Sciatic nerve (tissue), 2 donors: ENCODE measurements at regions of chr2 and their contacts with region 1.

Region 1: DNA sequence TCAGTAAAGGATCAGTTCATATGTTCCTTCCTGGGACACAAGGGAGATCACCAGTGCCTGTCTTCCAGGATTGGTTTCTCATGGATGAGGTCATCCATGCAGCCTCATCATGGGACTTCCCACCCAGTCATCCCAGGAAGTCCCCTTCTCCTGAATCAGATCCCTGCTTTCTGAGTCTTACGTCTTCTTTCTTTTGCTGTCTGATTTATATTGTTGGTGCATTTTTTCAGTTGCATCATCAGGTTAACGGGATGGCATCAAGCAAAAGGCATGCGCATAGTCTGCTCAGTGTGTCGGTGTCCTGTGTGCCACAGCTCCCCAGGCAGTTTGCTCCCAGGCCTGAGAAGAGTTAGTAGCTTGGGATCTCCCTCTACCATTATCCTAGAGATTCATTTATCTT is 105.9 kb downstream of the SOX11 start:
- DNase-seq: no peak
- ATAC-seq: no peak

Region 2: GRCh38 chr2:5264309-5264803 is 533.8 kb before region 1 on chr2:
- intact Hi-C with region 1: loop called (anchors 10 kb)
- DNase-seq: no peak
- ATAC-seq: no peak

Region 3: GRCh38 chr2:5706717-5707455 is 91.2 kb before region 1 on chr2:
- intact Hi-C with region 1: no loop called
- DNase-seq: no peak
- ATAC-seq: no peak